Activated T-helper 1 cell treated with anti-CD3 and anti-CD28 coated beads, Interleukin-12 subunit alpha, Interleukin-12 subunit beta, Interleukin-2, Interleukin-4 antibody, amounts not matched to agents 30 ng/mL and 10 ng/mL and 1 ng/mL, durations not matched to agents 14 hours and 24 hours and 36 hours (primary cell): ENCODE measurements at regions of chr7 and their contacts with region 1.

Region 1: DNA sequence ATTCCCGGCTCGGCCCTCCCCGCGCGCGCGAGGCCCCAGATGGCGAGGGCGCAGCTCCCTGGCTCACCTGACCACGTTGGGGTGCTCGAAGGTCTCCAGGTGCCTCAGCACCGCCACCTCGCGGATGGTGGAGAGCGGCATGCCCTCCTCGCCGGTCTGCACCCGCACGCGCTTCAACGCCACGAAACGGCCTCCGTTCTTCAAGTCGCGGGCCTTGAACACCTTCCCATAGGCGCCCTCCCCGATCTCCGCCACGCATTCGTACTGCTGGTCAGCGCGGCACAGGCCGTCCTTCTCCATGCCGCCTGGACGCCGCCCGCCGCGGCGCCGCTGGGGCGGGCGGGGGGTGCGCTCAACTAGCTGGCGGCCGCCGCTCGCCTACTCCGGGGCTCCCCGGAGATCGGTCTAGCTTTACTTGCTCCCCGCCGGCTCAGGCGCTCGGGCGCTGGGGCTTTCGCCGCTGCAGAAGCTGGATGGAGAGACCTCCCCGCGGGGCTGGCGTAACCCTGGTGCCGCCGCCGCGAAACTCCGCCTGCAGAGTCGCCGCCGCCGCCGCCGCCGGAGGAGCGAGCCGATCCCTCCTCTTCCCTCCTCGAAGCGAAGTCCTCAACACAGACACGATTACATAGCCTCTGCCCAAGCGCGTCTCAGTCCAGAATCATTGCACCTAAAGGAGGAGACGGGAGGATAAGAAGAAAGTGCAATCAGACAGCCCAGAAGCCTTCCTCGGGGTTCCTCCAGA is 3.2 kb downstream of the CDK6 start:
- DNase-seq: peak; percentile 87
- H3K4me3 Mint-ChIP-seq: peak overlapping the region; percentile 97
- H3K27ac Mint-ChIP-seq: peak overlapping the region; percentile 97
- H3K4me1 Mint-ChIP-seq: peaks cover 54% of the 10 kb centered on the region
- H3K27me3 Mint-ChIP-seq: peaks cover 5% of the 10 kb centered on the region

Region 2: GRCh38 chr7:92528188-92528957 is 304.8 kb before region 1 on chr7 and contains the starts of genes PEX1 and RBM48:
- intact Hi-C with region 1: loop called (anchors 1 kb)
- DNase-seq: peak; percentile 94
- H3K4me3 Mint-ChIP-seq: peak within 1 kb of the TSS; percentile 91
- H3K27ac Mint-ChIP-seq: peak within 1 kb of the TSS; percentile 94
- H3K4me1 Mint-ChIP-seq: peaks cover 24% of the 10 kb centered on the region
- H3K27me3 Mint-ChIP-seq: no peaks in the 10 kb centered on the region
- total RNA-seq, gene PEX1: 14.7 and 17.0 TPM in 2 replicates
- total RNA-seq, gene RBM48: 17.2 and 17.6 TPM in 2 replicates

Region 3: GRCh38 chr7:92691578-92691977 is 141.6 kb before region 1 on chr7:
- intact Hi-C with region 1: loop called (anchors 1 kb)
- DNase-seq: no peak
- H3K4me3 Mint-ChIP-seq: no peak overlapping the region
- H3K27ac Mint-ChIP-seq: peak overlapping the region; percentile 81
- H3K4me1 Mint-ChIP-seq: peaks cover 85% of the 10 kb centered on the region
- H3K27me3 Mint-ChIP-seq: no peaks in the 10 kb centered on the region

Region 4: DNA sequence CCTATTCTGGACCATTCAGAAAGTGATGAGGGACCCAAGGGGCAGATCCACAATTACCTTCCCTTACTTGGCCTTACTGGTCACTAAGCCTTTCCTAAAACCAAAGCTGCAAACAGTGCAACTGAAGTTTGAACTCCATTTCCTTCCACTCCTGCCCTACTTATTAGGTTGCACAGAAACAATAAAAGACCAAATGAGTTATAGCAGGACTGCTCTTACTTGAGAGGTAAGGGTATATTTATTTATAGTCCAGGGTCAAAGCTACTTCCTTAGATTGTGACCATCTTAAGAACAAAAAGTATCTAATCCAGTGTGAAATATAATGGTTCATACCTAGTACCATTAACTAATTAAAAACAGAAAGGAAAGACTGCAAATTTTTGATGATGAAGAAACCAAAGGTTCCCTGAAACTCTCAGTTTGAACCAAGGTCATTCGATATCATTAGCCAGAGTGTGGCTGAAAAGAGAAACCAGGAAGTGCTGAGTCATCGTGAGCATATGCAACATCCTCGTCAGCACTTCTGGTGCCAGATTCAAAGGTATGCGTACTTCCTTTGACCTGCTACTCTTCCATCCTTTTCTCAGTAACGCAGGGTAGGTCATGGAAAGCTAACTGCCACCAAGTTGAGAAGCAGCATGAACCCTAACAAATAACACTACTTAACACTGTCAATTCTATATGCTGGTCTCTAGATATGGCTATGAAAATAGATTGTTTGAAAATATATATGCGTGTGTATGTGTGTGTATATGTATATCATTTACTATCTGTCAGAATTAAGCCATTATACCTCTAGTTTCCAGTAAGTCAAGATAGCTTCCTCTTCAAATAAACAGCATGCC is 23.6 kb before region 1 on chr7:
- intact Hi-C with region 1: loop called (anchors 1 kb)
- DNase-seq: peak; percentile 72
- H3K4me3 Mint-ChIP-seq: peak overlapping the region; percentile 66
- H3K27ac Mint-ChIP-seq: peak overlapping the region; percentile 93
- H3K4me1 Mint-ChIP-seq: peaks cover 93% of the 10 kb centered on the region
- H3K27me3 Mint-ChIP-seq: no peaks in the 10 kb centered on the region

Region 5: GRCh38 chr7:92904292-92905131 is 71.3 kb after region 1 on chr7:
- intact Hi-C with region 1: loop called (anchors 1 kb)
- DNase-seq: peak; percentile 82
- H3K4me3 Mint-ChIP-seq: peak overlapping the region; percentile 55
- H3K27ac Mint-ChIP-seq: peak overlapping the region; percentile 94
- H3K4me1 Mint-ChIP-seq: peaks cover 28% of the 10 kb centered on the region
- H3K27me3 Mint-ChIP-seq: no peaks in the 10 kb centered on the region

Region 6: GRCh38 chr7:92916674-92917224 is 83.6 kb after region 1 on chr7:
- intact Hi-C with region 1: no loop called
- DNase-seq: no peak
- H3K4me3 Mint-ChIP-seq: no peak overlapping the region
- H3K27ac Mint-ChIP-seq: no peak overlapping the region
- H3K4me1 Mint-ChIP-seq: no peaks in the 10 kb centered on the region
- H3K27me3 Mint-ChIP-seq: no peaks in the 10 kb centered on the region

Region 7: DNA sequence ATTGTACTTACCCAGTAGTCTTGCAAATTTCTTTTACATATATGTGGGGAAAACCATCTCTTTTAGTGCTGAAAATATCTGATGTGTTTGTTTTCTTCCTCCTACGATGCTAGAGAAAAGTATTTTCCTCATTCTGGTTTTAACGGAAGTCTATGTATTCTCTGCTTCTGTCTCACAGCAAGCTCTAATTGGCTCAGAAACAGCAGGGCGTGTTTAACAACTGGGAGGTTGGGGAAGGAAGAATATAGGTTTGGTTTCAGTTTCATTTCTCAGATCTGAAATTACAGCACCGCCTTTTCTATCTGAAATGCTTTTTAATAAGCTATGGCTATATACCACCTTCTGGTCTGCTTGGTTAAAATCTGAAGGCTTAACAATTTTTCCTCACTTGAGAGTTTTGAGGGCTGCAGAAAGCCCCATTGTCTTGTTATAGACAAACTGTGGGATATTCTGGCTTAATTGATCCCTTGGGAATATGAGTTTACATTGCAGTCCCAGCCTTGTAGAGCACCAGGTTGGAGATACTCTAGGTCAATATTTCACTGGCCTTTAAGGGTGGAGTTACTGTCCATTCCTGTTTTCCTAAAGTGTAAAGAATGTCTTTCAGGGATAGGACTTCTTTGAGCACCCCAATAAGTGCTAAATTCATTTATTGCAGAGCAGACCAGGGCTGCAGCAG is 284.8 kb after region 1 on chr7 and contains the start of gene SAMD9:
- intact Hi-C with region 1: loop called (anchors 1 kb)
- DNase-seq: peak; percentile 63
- H3K4me3 Mint-ChIP-seq: peak within 1 kb of the TSS; percentile 91
- H3K27ac Mint-ChIP-seq: peak within 1 kb of the TSS; percentile 82
- H3K4me1 Mint-ChIP-seq: peaks cover 60% of the 10 kb centered on the region
- H3K27me3 Mint-ChIP-seq: no peaks in the 10 kb centered on the region
- total RNA-seq, gene SAMD9: 11.5 and 11.8 TPM in 2 replicates